ENCODE measurements at regions of chr4 and their contacts with region 1.

Region 1: DNA sequence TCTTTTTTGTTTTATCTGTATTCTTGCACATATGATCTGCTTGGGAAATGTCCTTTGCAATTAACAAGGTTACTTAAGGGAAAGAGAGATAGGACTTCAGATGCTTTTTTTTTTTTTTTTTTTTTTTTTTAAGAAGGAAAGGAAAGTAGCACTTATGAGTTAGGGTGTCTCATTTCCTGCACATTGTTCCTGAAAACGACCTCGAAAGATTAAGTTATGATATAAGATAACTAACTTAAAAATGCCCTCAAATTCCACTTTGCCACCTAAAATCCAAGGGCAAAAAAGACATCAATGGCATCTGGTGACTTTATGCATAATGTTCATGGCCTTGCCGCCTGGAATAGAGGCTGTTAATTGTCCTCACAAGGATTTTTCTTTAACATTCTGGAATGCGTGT is 44.9 kb downstream of the PCDH7 start:
- DNase-seq: no peak
- H3K4me3 ChIP-seq: no peak overlapping the region
- H3K27ac ChIP-seq: no peak overlapping the region
- H3K4me1 ChIP-seq: peaks cover 0 to 62% (median 12%) of the 10 kb centered on the region in 4 donors
- H3K27me3 ChIP-seq: no peaks in the 10 kb centered on the region
- CTCF ChIP-seq: no peak

Region 2: DNA sequence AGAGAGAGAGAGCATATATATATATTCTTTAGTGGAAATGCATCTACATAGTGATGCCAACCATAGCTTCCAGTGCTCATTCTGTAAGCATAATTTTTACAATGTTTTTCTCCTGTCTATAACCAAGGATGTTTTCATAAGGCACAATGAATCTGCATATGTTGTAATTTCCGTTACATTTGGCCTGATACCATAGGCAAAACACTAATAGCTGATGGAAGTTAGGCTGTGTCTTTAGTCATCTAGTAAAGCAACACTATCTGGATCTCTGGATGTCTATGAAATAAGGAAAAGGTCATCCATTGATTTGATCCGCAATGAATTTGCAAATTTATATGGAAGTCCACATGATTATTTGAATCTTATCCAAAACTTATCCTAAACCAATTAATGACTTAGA is 36.7 kb before region 1 on chr4:
- intact Hi-C with region 1: no loop called
- DNase-seq: no peak
- H3K4me3 ChIP-seq: peak overlapping the region; percentile 73 to 76
- H3K27ac ChIP-seq: peak overlapping the region in 1 of 2 donors; percentile 45
- H3K4me1 ChIP-seq: peaks cover 0 to 51% (median 9%) of the 10 kb centered on the region in 4 donors
- H3K27me3 ChIP-seq: no peaks in the 10 kb centered on the region
- CTCF ChIP-seq: no peak

Region 3: GRCh38 chr4:30808276-30808675 is 43.3 kb after region 1 on chr4:
- intact Hi-C with region 1: loop called (anchors 1 kb)
- DNase-seq: no peak
- H3K4me3 ChIP-seq: no peak overlapping the region
- H3K27ac ChIP-seq: no peak overlapping the region
- H3K4me1 ChIP-seq: peaks cover 0 to 38% (median 3%) of the 10 kb centered on the region in 4 donors
- H3K27me3 ChIP-seq: no peaks in the 10 kb centered on the region
- CTCF ChIP-seq: no peak

Region 4: GRCh38 chr4:30962939-30963338 is 197.9 kb after region 1 on chr4:
- intact Hi-C with region 1: no loop called
- DNase-seq: no peak
- H3K4me3 ChIP-seq: no peak overlapping the region
- H3K27ac ChIP-seq: no peak overlapping the region
- H3K4me1 ChIP-seq: peaks cover 0 to 7% (median 0%) of the 10 kb centered on the region in 4 donors
- H3K27me3 ChIP-seq: no peaks in the 10 kb centered on the region
- CTCF ChIP-seq: no peak

Measured in tibial artery (tissue), 4 donors.